HCT116 (cell line): ENCODE measurements at regions of chr3 and their contacts with region 1.

Region 1: GRCh38 chr3:128133273-128134084 is 9.9 kb upstream of the RUVBL1 start:
- DNase-seq: peak; percentile 36
- ATAC-seq: peak; percentile 97
- H3K4me3 ChIP-seq: no peak overlapping the region
- H3K27ac ChIP-seq: no peak overlapping the region
- H3K4me1 ChIP-seq: no peaks in the 10 kb centered on the region
- H3K27me3 ChIP-seq: no peaks in the 10 kb centered on the region
- CTCF ChIP-seq: peak; percentile 75 to 85 (median 82)
- POLR2A ChIP-seq: no peak
- RAD21 ChIP-seq: peak; percentile 90

Region 2: DNA sequence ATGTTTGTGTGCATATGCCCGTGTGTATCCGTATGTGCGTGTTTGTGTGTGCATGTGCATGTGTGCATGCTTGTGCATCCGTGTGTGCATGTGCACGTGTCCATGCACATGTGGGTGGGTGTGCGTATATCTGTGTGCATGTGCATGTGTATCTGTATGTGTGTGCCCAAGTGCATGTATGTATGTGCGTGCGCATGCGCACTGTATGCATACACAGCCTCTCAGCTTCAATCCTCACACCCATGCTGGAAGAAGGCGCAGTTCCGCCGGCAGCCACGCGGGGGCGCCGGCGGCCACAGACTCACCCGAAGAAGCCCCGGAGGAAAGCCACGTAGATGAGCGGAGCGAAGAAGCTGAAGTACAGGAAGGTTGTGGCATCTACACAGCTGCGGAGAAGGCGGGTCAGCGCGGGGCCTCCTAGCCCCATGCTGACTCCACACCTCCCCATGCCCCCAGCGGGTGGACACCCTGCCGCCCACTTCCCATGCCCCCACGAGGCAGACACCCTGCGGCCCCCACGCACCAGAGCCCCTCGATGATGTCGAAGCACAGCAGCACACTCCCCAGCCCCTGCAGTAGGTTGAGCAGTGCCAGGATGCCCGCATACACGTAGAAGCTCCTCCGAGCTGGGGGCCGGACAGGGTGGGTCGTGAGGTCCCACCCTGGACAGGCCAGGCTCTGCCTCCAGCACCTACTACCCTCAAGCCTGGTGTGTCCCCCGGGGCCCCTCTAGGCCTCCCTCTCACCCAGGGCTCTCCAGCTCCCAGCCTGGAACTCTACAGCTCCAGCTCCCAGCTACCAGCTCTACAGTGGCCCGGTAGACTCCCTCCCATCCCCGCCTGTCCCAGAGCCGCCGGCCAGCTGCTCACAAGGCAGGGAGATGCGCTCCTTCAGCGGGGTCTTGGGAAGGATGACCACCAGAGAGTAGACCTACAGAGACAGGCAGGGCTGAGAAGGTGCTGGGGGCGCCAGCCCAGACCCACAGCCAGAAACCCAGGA is 558.3 kb before region 1 on chr3:
- CTCF ChIA-PET with region 1: interaction called, 11 read pairs
- POLR2A ChIA-PET with region 1: no interaction called
- RAD21 ChIA-PET with region 1: interaction called in 1 of 2 experiments, 4 read pairs
- intact Hi-C with region 1: no loop called
- DNase-seq: peak; percentile 71
- ATAC-seq: peak; percentile 91
- H3K4me3 ChIP-seq: no peak overlapping the region
- H3K27ac ChIP-seq: peak overlapping the region; percentile 38; the same call in 1 of the 2 replicates
- H3K4me1 ChIP-seq: peaks cover 0 to 4% of the 10 kb centered on the region in 2 experiments; a peak in 1 of 4 replicates
- H3K27me3 ChIP-seq: no peaks in the 10 kb centered on the region
- CTCF ChIP-seq: peak; percentile 76 to 99 (median 98)
- POLR2A ChIP-seq: no peak
- RAD21 ChIP-seq: peak; percentile 86

Region 3: GRCh38 chr3:127652231-127652995 is 481.1 kb before region 1 on chr3:
- CTCF ChIA-PET with region 1: interaction called, 3 read pairs
- POLR2A ChIA-PET with region 1: no interaction called
- RAD21 ChIA-PET with region 1: no interaction called
- intact Hi-C with region 1: loop called (anchors 1 kb)
- DNase-seq: peak; percentile 41
- ATAC-seq: peak; percentile 94
- H3K4me3 ChIP-seq: no peak overlapping the region
- H3K27ac ChIP-seq: no peak overlapping the region
- H3K4me1 ChIP-seq: peaks cover 3 to 15% of the 10 kb centered on the region in 2 experiments
- H3K27me3 ChIP-seq: no peaks in the 10 kb centered on the region
- CTCF ChIP-seq: peak; percentile 82 to 94 (median 91)
- POLR2A ChIP-seq: no peak
- RAD21 ChIP-seq: peak; percentile 97

Region 4: DNA sequence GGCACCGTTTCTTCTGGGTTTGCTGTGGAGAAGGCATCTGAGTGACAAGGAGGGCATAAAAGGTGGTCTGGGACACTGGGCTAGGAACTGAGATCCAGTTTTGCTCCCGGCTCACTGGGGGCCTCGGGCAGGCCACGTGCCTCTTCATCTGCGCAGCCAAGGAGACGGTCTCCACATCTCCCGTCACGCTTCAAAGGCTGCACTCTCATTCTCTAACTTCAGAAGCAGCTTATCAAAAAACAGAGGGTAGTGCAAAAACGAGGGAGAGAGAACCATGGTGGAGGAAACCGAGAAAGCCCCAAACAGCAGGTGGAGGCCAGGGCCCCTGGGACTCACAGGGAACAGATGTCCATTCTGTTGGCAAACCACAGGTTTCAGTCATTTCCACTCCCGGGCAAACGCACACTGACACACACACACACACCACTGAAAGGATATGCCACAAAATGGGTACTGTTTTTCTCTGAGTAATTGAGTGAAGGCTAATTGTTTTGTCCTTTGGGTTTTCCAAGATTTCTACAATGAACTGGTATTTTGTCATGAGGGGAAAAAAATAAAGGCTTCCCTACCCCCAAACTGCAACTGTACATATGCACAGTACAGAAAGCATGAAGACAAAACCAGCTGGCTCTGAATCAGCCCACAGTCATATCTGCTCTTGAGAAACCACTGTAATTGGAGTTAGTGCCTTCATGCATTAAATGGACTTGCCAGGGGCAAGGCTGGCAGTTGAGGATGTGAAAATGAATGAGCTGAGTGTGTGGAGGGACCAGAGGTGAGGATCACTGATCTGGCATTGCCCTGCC is 383.1 kb before region 1 on chr3:
- CTCF ChIA-PET with region 1: no interaction called
- POLR2A ChIA-PET with region 1: no interaction called
- RAD21 ChIA-PET with region 1: no interaction called
- intact Hi-C with region 1: loop called (anchors 5 kb)
- DNase-seq: no peak
- ATAC-seq: no peak
- H3K4me3 ChIP-seq: no peak overlapping the region
- H3K27ac ChIP-seq: no peak overlapping the region
- H3K4me1 ChIP-seq: peaks cover 16 to 49% of the 10 kb centered on the region in 2 experiments
- H3K27me3 ChIP-seq: no peaks in the 10 kb centered on the region
- CTCF ChIP-seq: no peak
- POLR2A ChIP-seq: no peak
- RAD21 ChIP-seq: no peak

Region 5: DNA sequence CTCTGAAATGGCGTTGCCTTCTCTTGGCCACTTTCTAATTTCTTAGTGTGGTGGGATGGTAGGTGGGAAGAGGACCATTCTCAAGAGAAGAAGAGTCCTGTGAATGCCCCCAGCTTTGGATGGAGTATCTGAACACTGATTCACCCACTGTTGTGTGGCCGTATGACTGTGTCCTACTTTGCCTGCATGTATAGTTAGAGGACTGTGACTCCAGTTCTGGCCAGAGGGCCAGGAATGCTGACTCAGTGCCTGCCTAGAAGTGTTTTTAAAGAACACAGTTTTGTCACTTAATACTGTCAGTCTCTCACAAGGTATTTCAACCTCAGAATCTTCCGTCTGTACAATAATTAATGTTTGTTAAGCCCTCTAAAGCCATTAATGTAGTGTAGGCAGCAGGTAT is 79.1 kb before region 1 on chr3:
- CTCF ChIA-PET with region 1: no interaction called
- POLR2A ChIA-PET with region 1: no interaction called
- RAD21 ChIA-PET with region 1: no interaction called
- intact Hi-C with region 1: no loop called
- DNase-seq: no peak
- ATAC-seq: no peak
- H3K4me3 ChIP-seq: 0 out of 4 replicates have a peak overlapping the region, but pooled peaks of 1 of the 2 experiments have one; percentile 86
- H3K27ac ChIP-seq: no peak overlapping the region
- H3K4me1 ChIP-seq: peaks cover 6 to 21% of the 10 kb centered on the region in 2 experiments
- H3K27me3 ChIP-seq: no peaks in the 10 kb centered on the region
- CTCF ChIP-seq: no peak
- POLR2A ChIP-seq: no peak
- RAD21 ChIP-seq: no peak

Region 6: GRCh38 chr3:128095222-128095703 is 38.2 kb before region 1 on chr3:
- CTCF ChIA-PET with region 1: interaction called, 20 read pairs
- POLR2A ChIA-PET with region 1: no interaction called
- RAD21 ChIA-PET with region 1: no interaction called
- intact Hi-C with region 1: loop called (anchors 1 kb)
- DNase-seq: peak; percentile 32
- ATAC-seq: peak; percentile 99
- H3K4me3 ChIP-seq: no peak overlapping the region
- H3K27ac ChIP-seq: no peak overlapping the region; the same call in 1 of the 2 replicates
- H3K4me1 ChIP-seq: peaks cover 0 to 4% of the 10 kb centered on the region in 2 experiments; a peak in 1 of 4 replicates
- H3K27me3 ChIP-seq: no peaks in the 10 kb centered on the region
- CTCF ChIP-seq: peak; percentile 48 to 75 (median 75)
- POLR2A ChIP-seq: no peak
- RAD21 ChIP-seq: peak; percentile 77

Region 7: GRCh38 chr3:128343287-128344051 is 210.0 kb after region 1 on chr3:
- CTCF ChIA-PET with region 1: no interaction called
- POLR2A ChIA-PET with region 1: no interaction called
- RAD21 ChIA-PET with region 1: no interaction called
- intact Hi-C with region 1: no loop called
- DNase-seq: no peak
- ATAC-seq: peak; percentile 79
- H3K4me3 ChIP-seq: no peak overlapping the region
- H3K27ac ChIP-seq: no peak overlapping the region
- H3K4me1 ChIP-seq: peaks cover 6 to 16% of the 10 kb centered on the region in 2 experiments
- H3K27me3 ChIP-seq: no peaks in the 10 kb centered on the region
- CTCF ChIP-seq: no peak
- POLR2A ChIP-seq: no peak
- RAD21 ChIP-seq: no peak

Region 8: GRCh38 chr3:128714887-128715491 is 581.5 kb after region 1 on chr3:
- CTCF ChIA-PET with region 1: no interaction called
- POLR2A ChIA-PET with region 1: no interaction called
- RAD21 ChIA-PET with region 1: no interaction called
- intact Hi-C with region 1: no loop called
- DNase-seq: no peak
- ATAC-seq: no peak
- H3K4me3 ChIP-seq: no peak overlapping the region
- H3K27ac ChIP-seq: no peak overlapping the region
- H3K4me1 ChIP-seq: no peaks in the 10 kb centered on the region; a peak in 1 of 4 replicates
- H3K27me3 ChIP-seq: no peaks in the 10 kb centered on the region
- CTCF ChIP-seq: no peak
- POLR2A ChIP-seq: no peak
- RAD21 ChIP-seq: no peak